ENCODE measurements at regions of chr14 and their contacts with region 1.

Region 1: GRCh38 chr14:94485944-94486841 is 10.2 kb upstream of the SERPINA9 start:
- DNase-seq: peak; percentile 83
- ATAC-seq: peak; percentile 96
- H3K4me3 Mint-ChIP-seq: peak overlapping the region; percentile 58
- H3K27ac Mint-ChIP-seq: peak overlapping the region; percentile 20
- H3K4me1 Mint-ChIP-seq: peaks cover 19% of the 10 kb centered on the region
- H3K27me3 Mint-ChIP-seq: no peaks in the 10 kb centered on the region
- CTCF ChIP-seq: peak; percentile 99

Region 2: DNA sequence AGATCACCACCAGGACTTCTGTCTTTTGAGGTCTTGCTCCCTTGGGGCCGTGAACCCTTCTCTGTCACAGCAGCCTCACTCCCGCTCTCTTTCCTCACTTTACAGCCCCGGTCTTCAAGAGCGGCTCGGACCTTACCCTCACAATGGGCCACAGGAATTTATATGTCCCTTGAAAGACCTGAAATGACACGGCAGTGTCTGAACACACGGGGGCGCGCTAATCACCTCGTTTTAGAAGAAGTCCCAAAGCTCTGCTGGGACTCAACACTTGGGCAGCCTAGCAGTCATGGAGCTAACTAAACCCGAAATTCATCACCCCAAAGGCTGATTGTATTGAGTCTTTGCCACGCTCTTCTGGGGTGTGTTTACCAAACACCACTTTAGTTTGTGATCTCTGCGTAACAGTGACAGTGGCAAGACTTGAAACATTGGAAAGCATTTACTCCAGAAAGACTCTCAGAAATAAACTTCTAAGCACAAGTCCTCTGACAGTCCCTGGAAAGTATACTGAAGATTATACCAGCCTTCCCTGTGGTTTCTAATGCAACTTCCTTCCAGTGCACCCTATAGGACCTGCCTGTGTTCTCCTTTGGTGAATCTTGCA is 62.6 kb before region 1 on chr14:
- CTCF ChIA-PET with region 1: interaction called, 74 read pairs
- POLR2A ChIA-PET with region 1: no interaction called
- DNase-seq: peak; percentile 90
- ATAC-seq: peak; percentile 98
- H3K4me3 Mint-ChIP-seq: no peak overlapping the region
- H3K27ac Mint-ChIP-seq: no peak overlapping the region
- H3K4me1 Mint-ChIP-seq: peaks cover 14% of the 10 kb centered on the region
- H3K27me3 Mint-ChIP-seq: peaks cover 2% of the 10 kb centered on the region; the same call in 1 of the 2 replicates
- CTCF ChIP-seq: peak; percentile 56

Region 3: DNA sequence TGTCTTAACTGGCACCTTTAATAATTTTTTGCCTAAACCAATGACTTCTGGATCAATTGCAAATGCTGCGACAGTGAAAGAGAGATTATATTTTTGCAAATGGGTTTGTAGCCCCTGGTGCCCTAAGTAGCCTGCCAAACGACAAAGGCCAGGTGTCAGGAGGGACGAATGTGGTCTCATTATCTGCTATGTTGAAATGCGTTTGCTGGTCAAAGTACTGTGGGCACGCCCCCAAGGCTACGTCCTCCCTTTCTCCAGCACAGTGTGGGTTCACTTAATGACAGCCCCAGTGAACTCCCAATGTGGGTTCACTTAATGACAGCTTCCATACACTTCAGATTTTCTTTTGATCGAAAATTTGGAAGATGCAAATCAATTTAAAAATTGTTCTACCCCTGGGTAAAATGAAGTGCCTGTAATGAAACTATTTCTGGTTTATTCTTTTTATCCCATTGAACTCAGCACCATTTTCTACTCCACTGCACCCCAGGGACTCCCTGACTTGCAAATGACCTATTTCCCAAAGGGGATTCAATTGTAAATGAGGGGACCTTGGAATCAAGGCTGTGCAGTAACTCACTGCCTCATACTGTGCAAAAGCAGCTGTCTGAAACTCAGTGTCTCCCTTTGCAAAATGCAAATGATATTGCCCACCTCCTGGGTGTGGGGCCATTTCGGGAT is 35.0 kb before region 1 on chr14:
- CTCF ChIA-PET with region 1: interaction called, 33 read pairs
- POLR2A ChIA-PET with region 1: no interaction called
- DNase-seq: peak; percentile 58
- ATAC-seq: peak; percentile 85
- H3K4me3 Mint-ChIP-seq: peak overlapping the region; percentile 20
- H3K27ac Mint-ChIP-seq: peak overlapping the region; percentile 65
- H3K4me1 Mint-ChIP-seq: peaks cover 51% of the 10 kb centered on the region
- H3K27me3 Mint-ChIP-seq: peaks cover 7% of the 10 kb centered on the region
- CTCF ChIP-seq: no peak

Region 4: GRCh38 chr14:94509356-94509755 is 23.2 kb after region 1 on chr14 and contains the start of gene SERPINA12:
- CTCF ChIA-PET with region 1: interaction called, 13 read pairs
- POLR2A ChIA-PET with region 1: no interaction called
- DNase-seq: no peak
- ATAC-seq: no peak
- H3K4me3 Mint-ChIP-seq: no peak within 1 kb of the TSS
- H3K27ac Mint-ChIP-seq: no peak within 1 kb of the TSS
- H3K4me1 Mint-ChIP-seq: no peaks in the 10 kb centered on the region
- H3K27me3 Mint-ChIP-seq: no peaks in the 10 kb centered on the region
- CTCF ChIP-seq: no peak
- total RNA-seq, gene SERPINA12: not detected in 3 replicates

Region 5: DNA sequence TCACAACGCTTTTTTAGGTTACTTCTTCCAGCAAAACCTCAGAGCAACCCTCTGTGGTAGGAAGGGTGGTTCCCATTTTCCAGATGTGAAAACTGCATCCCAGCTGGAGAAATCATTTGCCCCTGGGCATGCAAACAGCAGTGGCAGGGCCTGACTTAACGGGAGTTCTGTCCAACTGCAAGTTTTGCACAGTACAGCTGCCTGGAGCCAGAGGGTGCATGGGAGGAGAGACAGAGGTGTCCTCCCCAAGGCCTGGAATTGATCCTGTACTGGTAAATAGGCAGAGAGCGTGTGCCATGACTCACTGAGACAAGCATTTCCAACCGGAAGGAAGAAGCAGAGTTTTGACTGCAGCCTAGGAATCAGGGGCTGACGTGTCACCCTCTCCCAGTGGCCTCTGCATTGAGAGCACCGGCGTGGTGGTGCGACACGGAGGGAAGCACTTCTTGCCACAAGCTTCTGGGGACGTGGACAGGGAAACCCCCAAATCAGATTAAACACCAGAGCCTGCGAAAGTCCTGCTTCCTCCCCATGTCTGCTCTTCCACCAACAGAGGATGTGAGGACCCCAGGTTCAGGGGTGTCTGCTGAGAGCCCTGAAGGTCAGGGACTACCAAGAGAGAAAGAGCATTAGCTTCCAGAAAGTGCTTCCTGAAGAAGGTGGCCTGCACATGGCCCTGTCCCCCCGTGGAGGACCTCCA is 56.1 kb after region 1 on chr14:
- CTCF ChIA-PET with region 1: interaction called, 38 read pairs
- POLR2A ChIA-PET with region 1: no interaction called
- DNase-seq: no peak
- ATAC-seq: no peak
- H3K4me3 Mint-ChIP-seq: no peak overlapping the region
- H3K27ac Mint-ChIP-seq: no peak overlapping the region
- H3K4me1 Mint-ChIP-seq: peaks cover 36% of the 10 kb centered on the region
- H3K27me3 Mint-ChIP-seq: no peaks in the 10 kb centered on the region; the same call in 1 of the 2 replicates
- CTCF ChIP-seq: no peak

Region 6: DNA sequence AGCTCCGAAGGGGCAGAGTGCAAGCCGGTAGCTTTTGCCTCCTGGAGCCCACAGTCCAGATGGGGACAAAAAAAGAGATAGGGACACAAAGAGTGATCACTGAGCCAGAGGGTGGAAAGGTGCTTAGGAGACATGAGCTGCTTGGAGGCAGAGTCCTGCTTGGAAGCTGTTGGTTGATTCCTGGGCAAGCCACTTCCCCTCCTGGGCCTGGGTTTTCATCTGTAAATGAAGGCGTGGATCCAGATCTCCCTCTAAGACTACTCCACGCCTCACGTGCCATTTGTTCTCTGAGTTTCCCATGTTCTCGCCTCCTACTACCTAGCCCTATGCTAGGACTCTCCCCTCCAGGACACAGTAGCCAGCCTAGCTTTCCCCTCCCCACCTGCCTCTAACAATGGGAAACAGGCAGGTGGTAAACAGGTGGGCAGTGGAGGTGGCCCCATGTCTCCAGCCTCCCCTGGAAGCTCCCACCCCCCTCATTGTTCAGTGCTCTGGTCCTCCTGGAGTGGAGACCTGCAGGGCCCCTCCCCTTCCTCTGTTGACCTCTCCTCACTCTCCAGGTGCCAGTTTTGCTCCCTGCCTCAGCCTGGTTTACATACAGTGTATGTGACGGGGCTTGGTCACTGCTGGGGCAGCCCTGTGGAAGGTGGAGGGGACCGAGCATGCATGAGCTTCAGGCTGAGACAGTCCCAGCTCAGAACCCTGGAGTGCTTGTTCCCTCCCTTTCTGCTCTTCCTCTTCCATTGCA is 129.8 kb after region 1 on chr14:
- CTCF ChIA-PET with region 1: interaction called, 10 read pairs
- POLR2A ChIA-PET with region 1: no interaction called
- DNase-seq: no peak
- ATAC-seq: no peak
- H3K4me3 Mint-ChIP-seq: no peak overlapping the region
- H3K27ac Mint-ChIP-seq: no peak overlapping the region
- H3K4me1 Mint-ChIP-seq: no peaks in the 10 kb centered on the region
- H3K27me3 Mint-ChIP-seq: peaks cover 3% of the 10 kb centered on the region
- CTCF ChIP-seq: no peak

Region 7: DNA sequence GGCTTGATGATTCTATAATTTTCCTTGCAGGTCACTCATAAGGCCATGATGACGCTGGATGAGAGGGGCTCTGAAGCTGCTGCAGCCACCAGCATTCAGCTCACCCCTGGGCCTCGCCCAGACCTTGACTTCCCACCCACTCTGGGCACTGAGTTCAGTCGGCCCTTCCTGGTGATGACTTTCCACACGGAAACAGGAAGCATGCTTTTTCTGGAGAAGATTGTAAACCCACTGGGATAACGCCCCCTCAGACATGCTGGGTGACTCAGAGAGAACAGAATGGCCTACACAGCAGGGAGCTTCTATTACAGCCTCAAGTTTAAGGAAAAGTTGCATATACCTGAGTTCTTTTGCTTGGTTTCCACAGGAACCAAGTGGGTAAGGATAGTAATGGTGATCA is 160.3 kb after region 1 on chr14:
- CTCF ChIA-PET with region 1: no interaction called
- POLR2A ChIA-PET with region 1: no interaction called
- DNase-seq: no peak
- ATAC-seq: no peak
- H3K4me3 Mint-ChIP-seq: no peak overlapping the region
- H3K27ac Mint-ChIP-seq: no peak overlapping the region
- H3K4me1 Mint-ChIP-seq: no peaks in the 10 kb centered on the region
- H3K27me3 Mint-ChIP-seq: no peaks in the 10 kb centered on the region; the same call in 1 of the 2 replicates
- CTCF ChIP-seq: no peak

Region 8: GRCh38 chr14:94717808-94718207 is 231.6 kb after region 1 on chr14:
- CTCF ChIA-PET with region 1: no interaction called
- POLR2A ChIA-PET with region 1: no interaction called
- DNase-seq: no peak
- ATAC-seq: no peak
- H3K4me3 Mint-ChIP-seq: no peak overlapping the region
- H3K27ac Mint-ChIP-seq: no peak overlapping the region
- H3K4me1 Mint-ChIP-seq: 0 out of 2 replicates have a peak, but pooled peaks cover 3% of the 10 kb centered on the region
- H3K27me3 Mint-ChIP-seq: no peaks in the 10 kb centered on the region
- CTCF ChIP-seq: no peak

Measured in WTC11 (cell line).